ENCODE measurements at regions of chr11 and their contacts with region 1.

Region 1: GRCh38 chr11:116787786-116788486 is at the start of gene ZPR1:
- DNase-seq: peak; percentile 88
- H3K4me3 Mint-ChIP-seq: peak within 1 kb of the TSS; percentile 87
- H3K27ac Mint-ChIP-seq: peak within 1 kb of the TSS; percentile 92
- H3K4me1 Mint-ChIP-seq: peaks cover 43% of the 10 kb centered on the region
- H3K27me3 Mint-ChIP-seq: no peaks in the 10 kb centered on the region
- total RNA-seq, gene ZPR1: 55.9 to 58.3 TPM

Region 2: DNA sequence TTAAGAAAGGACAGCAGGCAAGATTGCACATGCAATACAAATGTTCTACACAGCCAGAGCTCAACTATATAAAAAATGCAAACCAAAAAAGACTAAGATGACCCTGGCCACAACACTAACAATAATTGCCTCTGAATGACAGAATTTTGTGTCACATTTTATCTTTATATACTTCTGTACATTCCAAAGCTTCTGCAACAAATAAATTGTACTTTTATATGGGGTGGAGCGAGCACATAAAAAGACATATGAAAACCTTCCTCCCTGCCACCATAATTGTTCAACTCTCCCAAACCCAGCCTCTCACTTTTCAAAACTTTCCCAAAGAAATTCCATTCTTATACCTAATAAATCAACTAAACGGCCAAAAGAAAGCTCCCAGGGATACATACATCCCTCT is 25.8 kb before region 1 on chr11:
- CTCF ChIA-PET with region 1: no interaction called
- POLR2A ChIA-PET with region 1: no interaction called
- DNase-seq: no peak
- H3K4me3 Mint-ChIP-seq: no peak overlapping the region
- H3K27ac Mint-ChIP-seq: no peak overlapping the region
- H3K4me1 Mint-ChIP-seq: peaks cover 7% of the 10 kb centered on the region
- H3K27me3 Mint-ChIP-seq: no peaks in the 10 kb centered on the region

Region 3: DNA sequence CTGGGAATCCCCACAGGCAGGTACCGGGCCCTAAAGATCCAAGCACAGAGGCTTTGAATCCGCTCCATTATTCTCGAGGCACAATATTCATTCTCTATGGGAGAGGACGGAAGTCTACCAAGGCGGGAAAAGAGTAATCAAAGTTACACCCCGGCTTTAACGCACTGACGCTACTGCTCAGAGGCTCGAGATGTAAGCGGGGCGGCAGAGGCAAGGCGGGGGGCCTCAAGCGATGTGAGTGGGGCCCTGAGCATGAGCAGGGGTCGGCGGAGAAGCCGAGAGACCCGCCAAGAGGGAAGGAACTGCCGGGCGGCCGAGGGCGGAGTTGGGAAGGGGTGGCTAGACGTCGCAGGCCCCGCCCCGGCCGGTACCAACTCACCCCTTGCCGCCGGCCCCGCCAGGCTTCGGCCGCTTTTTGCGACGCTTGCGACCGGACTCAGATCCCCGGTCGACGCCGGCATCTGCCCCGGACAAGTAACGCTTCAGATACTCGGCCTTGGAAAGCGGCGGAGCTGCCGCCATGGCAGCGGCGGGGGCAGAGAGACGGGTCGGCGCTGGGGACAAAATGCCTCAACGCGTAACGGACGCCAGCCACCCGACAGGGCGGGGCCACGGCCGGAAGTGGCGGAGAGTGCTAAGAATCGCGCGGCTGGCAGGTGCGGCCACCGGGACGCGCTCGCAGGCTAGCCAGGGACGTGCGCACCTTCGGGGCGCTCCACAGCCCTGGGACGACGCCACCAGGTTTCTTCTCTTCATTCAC is 15.3 kb before region 1 on chr11 and contains the start of gene BUD13:
- CTCF ChIA-PET with region 1: interaction called, 15 read pairs
- POLR2A ChIA-PET with region 1: no interaction called
- DNase-seq: peak; percentile 94
- H3K4me3 Mint-ChIP-seq: peak within 1 kb of the TSS; percentile 98
- H3K27ac Mint-ChIP-seq: peak within 1 kb of the TSS; percentile 97
- H3K4me1 Mint-ChIP-seq: peaks cover 54% of the 10 kb centered on the region
- H3K27me3 Mint-ChIP-seq: no peaks in the 10 kb centered on the region
- total RNA-seq, gene BUD13: 37.5 to 39.9 TPM

Region 4: GRCh38 chr11:116823031-116823843 is 35.3 kb after region 1 on chr11 and contains the start of gene APOA4:
- CTCF ChIA-PET with region 1: no interaction called
- POLR2A ChIA-PET with region 1: no interaction called
- DNase-seq: no peak
- H3K4me3 Mint-ChIP-seq: no peak within 1 kb of the TSS
- H3K27ac Mint-ChIP-seq: no peak within 1 kb of the TSS
- H3K4me1 Mint-ChIP-seq: no peaks in the 10 kb centered on the region
- H3K27me3 Mint-ChIP-seq: no peaks in the 10 kb centered on the region
- total RNA-seq, gene APOA4: not detected

Region 5: GRCh38 chr11:116835791-116836631 is 48.1 kb after region 1 on chr11:
- CTCF ChIA-PET with region 1: interaction called, 33 read pairs
- POLR2A ChIA-PET with region 1: interaction called, 3 read pairs
- DNase-seq: peak; percentile 83
- H3K4me3 Mint-ChIP-seq: peak overlapping the region; percentile 66
- H3K27ac Mint-ChIP-seq: peak overlapping the region; percentile 80
- H3K4me1 Mint-ChIP-seq: peaks cover 16% of the 10 kb centered on the region
- H3K27me3 Mint-ChIP-seq: no peaks in the 10 kb centered on the region

Region 6: DNA sequence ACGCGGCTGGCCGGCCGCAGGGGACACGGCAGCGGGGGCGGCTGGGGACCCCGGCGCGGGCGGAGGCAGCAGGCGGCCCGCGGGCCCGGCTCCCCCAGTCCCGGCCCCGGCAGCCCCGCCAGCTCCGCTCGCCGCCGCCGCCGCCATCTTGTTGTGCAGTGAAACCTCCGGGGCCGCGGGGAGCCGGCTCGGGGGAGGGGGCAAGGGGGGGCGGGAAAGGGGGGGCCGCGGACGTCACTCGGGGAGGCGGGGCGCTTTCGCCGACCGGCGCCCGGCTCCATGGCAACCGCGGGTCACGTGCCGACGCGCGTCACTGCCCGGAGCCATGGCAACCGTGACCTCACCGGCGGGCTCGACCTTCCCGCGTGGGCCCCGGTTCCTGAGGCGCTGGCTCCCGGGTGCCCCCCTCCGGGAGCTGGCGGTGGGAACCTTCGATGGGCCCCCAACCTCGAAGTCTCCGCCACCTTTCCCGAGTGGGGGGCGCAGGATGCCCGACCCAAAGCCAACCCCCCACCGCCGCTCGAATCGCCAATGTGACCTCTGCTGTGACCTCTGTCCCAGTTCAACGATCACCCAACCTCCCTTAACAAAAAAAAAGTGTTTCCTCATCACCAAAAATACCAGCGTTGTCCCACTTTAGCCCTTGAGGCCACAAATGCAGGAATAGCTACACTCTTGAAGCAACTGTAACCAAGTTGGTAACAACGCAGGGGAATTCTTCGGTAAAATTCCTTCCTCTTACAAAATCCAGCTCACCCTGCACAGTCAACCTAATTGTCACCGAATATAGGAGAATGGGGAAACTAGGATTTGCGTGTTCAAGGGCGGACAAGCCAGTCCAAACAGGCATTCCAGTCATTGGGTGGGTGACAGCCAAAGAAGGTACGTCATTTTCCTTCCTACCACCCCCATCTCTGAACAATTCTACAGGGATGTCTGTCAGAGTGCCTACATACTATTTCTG is 310.6 kb after region 1 on chr11 and contains the start of gene SIK3:
- CTCF ChIA-PET with region 1: interaction called, 12 read pairs
- POLR2A ChIA-PET with region 1: interaction called, 5 read pairs
- DNase-seq: peak; percentile 92
- H3K4me3 Mint-ChIP-seq: peak within 1 kb of the TSS; percentile 89
- H3K27ac Mint-ChIP-seq: peak within 1 kb of the TSS; percentile 93
- H3K4me1 Mint-ChIP-seq: peaks cover 54% of the 10 kb centered on the region
- H3K27me3 Mint-ChIP-seq: peaks cover 2% of the 10 kb centered on the region
- total RNA-seq, gene SIK3: 37.5 to 39.6 TPM

Region 7: GRCh38 chr11:117226388-117227385 is 438.8 kb after region 1 on chr11:
- CTCF ChIA-PET with region 1: interaction called, 10 read pairs
- POLR2A ChIA-PET with region 1: no interaction called
- DNase-seq: peak; percentile 62
- H3K4me3 Mint-ChIP-seq: no peak overlapping the region
- H3K27ac Mint-ChIP-seq: peak overlapping the region; percentile 71
- H3K4me1 Mint-ChIP-seq: peaks cover 41% of the 10 kb centered on the region
- H3K27me3 Mint-ChIP-seq: no peaks in the 10 kb centered on the region

Measured in activated CD4-positive, alpha-beta T cell treated with anti-CD3 and anti-CD28 coated beads, Interleukin-2, amount 10 ng/mL, durations not matched to agents 7 days and 5 days (primary cell).